ENCODE measurements at regions of chr19 and their contacts with region 1.

Region 1: DNA sequence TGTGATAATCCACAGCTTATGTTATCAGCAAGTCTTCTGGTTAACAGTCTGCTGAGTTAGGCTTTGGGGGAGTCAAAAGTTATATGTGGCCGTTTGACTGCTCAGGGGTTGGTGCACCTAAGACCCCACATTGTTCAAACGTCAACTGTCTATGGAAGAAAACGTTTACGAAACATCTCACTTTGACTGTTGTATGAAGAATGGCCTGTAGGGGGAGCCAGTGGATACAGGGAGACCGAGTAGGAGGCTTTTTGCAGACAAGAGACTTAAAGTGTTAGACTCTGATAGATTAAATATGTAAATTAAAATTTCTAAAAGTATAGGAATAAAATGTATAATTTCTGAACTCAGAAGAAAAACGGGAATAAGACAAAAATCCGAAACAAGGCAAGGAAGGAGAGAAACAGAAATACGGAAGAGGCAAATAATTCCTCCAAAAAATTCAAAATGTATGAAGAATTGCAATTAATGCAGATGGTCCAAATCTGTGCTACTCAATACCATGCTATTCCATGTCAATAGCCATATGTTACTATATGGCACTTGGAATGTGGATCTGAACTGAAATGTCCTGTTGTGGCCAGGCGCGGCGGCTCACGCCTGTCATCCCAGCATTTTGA is 37.8 kb downstream of the TNFSF14 start:
- DNase-seq: peak; percentile 52 to 90 (median 84)
- ATAC-seq: peak; percentile 96
- H3K4me3 ChIP-seq: no peak overlapping the region
- H3K4me3 Mint-ChIP-seq: no peak overlapping the region
- H3K27ac ChIP-seq: no peak overlapping the region
- H3K27ac Mint-ChIP-seq: no peak overlapping the region
- H3K4me1 ChIP-seq: no peaks in the 10 kb centered on the region
- H3K4me1 Mint-ChIP-seq: peaks cover 12% of the 10 kb centered on the region
- H3K27me3 ChIP-seq: no peaks in the 10 kb centered on the region
- H3K27me3 Mint-ChIP-seq: peaks cover 3% of the 10 kb centered on the region
- CTCF ChIP-seq: peak; percentile 85

Region 2: DNA sequence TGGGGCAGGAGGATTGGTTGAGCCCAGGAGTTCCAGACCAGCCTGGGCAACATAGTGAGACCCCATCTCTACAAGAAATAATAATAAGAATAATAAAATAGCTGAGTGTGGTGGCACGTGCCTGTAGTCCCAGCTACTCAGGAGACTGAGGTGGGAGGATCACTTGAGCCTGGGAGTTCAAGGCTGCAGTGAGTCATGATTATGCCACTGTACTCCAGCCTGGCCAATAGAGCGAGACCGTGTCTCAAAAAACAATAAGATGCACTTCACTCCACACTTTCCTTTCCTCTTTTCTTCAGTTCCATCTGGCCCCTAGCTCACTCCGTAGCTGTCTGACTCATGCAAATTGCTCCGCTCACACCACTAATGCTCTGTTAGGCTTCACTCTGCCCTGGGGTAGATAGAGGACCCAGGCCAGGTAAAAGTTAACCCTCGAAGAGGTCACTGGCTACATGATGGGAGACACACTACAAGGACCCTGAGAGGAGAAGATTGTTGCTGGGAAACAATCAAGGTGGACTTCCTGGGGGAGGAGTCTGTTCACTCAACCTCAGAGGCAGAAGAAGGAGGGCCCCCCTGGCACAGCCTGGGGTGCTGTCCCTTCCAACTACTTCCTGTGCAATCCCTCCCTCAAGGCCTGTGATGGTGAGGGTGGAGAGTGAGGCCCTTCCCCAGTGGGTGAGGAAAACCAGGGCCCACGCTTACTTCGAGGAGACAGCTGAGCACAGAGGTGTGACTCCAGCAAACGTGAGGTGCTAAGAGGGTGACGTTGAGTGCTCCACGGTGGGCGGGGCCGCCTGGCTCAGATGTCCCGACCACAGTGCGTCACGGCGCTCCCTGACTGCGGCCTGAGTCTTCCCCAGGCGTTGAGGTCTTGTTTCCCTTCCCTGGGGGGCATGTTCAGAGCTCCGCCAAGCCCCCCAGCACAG is 110.1 kb before region 1 on chr19:
- CTCF ChIA-PET with region 1: interaction called, 23 read pairs
- POLR2A ChIA-PET with region 1: no interaction called
- intact Hi-C with region 1: loop called (anchors 1 to 2 kb)
- DNase-seq: peak; percentile 41 to 96 (median 70)
- ATAC-seq: peak; percentile 91
- H3K4me3 ChIP-seq: no peak overlapping the region
- H3K4me3 Mint-ChIP-seq: no peak overlapping the region
- H3K27ac ChIP-seq: peak overlapping the region; percentile 21 to 89
- H3K27ac Mint-ChIP-seq: peak overlapping the region; percentile 63
- H3K4me1 ChIP-seq: peaks cover 26% of the 10 kb centered on the region
- H3K4me1 Mint-ChIP-seq: peaks cover 32% of the 10 kb centered on the region
- H3K27me3 ChIP-seq: no peaks in the 10 kb centered on the region
- H3K27me3 Mint-ChIP-seq: no peaks in the 10 kb centered on the region
- CTCF ChIP-seq: no peak

Region 3: GRCh38 chr19:6674868-6675305 is 42.8 kb after region 1 on chr19:
- CTCF ChIA-PET with region 1: interaction called, 6 read pairs
- POLR2A ChIA-PET with region 1: no interaction called
- intact Hi-C with region 1: loop called in 1 of 2 experiments (anchors 5 kb)
- DNase-seq: peak; percentile 56 to 93 (median 86)
- ATAC-seq: peak; percentile 67
- H3K4me3 ChIP-seq: peak overlapping the region in 1 of 2 experiments; percentile 31
- H3K4me3 Mint-ChIP-seq: peak overlapping the region; percentile 50
- H3K27ac ChIP-seq: peak overlapping the region in 1 of 2 experiments; percentile 6
- H3K27ac Mint-ChIP-seq: peak overlapping the region; percentile 84
- H3K4me1 ChIP-seq: peaks cover 33% of the 10 kb centered on the region
- H3K4me1 Mint-ChIP-seq: peaks cover 45% of the 10 kb centered on the region
- H3K27me3 ChIP-seq: no peaks in the 10 kb centered on the region
- H3K27me3 Mint-ChIP-seq: no peaks in the 10 kb centered on the region
- CTCF ChIP-seq: no peak

Region 4: DNA sequence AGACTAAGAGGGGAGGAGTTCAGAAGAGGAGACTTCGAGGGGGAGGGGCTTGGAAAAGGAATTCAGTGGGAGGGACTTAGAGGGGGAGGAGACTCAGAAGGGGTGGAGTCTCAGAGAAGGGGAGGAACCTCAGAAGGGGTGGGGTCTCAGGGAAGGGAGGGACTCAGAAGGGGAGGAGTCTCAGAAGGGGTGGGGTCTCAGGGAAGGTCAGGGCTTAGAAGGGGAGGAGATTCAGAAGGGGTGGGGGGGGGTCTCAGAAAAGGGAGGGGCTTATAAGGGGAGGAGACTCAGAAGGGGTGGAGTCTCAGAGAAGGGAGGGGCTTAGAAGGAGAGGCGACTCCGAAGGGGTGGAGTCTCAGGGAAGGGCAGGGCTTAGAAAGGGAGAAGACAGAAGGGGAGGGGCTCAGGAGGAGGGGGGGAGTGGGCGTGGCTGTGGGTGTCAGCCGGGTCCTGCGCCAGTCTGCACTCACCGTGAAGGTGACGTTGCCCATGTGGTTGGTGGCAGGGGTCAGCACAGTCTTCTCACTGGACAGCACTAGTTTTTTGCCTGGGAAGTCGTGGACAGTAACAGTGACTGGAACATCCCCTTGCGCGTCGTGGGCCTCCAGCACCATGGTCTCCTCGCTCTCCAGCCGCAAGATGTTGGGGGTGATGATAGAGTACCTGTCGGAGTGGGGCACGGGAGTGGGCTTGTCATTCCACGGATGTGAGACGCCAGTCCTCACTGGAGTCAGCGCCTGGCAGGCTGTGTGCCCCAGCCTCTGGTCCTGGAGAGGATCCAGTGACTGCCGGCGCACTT is 86.8 kb after region 1 on chr19:
- CTCF ChIA-PET with region 1: no interaction called
- POLR2A ChIA-PET with region 1: no interaction called
- intact Hi-C with region 1: loop called (anchors 5 kb)
- DNase-seq: peak in 3 of 9 experiments; percentile 46 to 62 (median 62)
- ATAC-seq: peak; percentile 83
- H3K4me3 ChIP-seq: no peak overlapping the region
- H3K4me3 Mint-ChIP-seq: no peak overlapping the region
- H3K27ac ChIP-seq: no peak overlapping the region
- H3K27ac Mint-ChIP-seq: no peak overlapping the region
- H3K4me1 ChIP-seq: no peaks in the 10 kb centered on the region
- H3K4me1 Mint-ChIP-seq: peaks cover 12% of the 10 kb centered on the region
- H3K27me3 ChIP-seq: no peaks in the 10 kb centered on the region
- H3K27me3 Mint-ChIP-seq: no peaks in the 10 kb centered on the region
- CTCF ChIP-seq: no peak

Region 5: DNA sequence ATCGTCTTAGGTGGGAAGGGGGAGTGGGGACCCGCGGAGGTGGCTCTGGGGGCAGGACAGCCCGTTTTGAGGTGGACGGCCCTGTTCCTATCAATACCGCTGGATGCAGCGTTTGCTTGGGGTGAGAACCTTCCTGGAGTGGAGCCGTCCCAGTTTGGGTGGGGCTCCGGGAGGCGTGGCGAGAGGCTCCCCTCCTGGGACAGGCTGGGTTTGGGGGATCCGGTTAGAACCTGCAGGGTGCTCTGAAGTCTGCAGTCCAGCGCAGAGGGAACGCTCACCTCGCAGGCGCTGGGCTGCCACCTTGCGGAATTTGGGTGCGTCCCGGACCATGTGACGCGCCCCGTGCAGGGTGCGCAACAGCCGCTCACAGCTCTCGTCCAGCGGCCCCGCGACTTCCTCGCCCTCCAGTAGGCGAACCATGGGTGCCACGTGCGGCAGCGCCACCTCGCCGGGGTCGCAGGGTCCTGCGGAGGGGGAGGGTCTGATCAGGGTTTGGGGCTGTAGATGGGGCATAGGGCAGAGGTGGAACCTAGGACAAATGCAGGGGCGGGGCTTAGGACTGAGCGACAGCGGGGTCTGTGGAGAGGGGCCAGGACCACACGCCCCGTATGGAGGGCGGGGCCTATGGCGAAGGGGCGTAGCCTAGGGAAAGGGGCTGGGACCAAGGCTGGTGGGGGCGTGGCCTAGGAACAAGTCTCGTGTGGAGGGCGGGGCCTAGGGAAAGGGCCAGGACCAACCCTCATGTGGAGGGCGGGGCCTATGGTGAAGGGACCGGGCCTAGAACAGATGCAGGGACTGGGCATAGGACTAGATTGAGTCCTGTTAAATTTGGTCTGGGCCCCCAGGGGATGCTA is 121.3 kb after region 1 on chr19:
- CTCF ChIA-PET with region 1: interaction called, 4 read pairs
- POLR2A ChIA-PET with region 1: no interaction called
- intact Hi-C with region 1: loop called in 1 of 2 experiments (anchors 1 kb)
- DNase-seq: peak; percentile 51 to 89 (median 73)
- ATAC-seq: peak; percentile 90
- H3K4me3 ChIP-seq: peak overlapping the region; percentile 42 to 59
- H3K4me3 Mint-ChIP-seq: peak overlapping the region; percentile 76
- H3K27ac ChIP-seq: peak overlapping the region; percentile 35 to 40
- H3K27ac Mint-ChIP-seq: peak overlapping the region; percentile 81
- H3K4me1 ChIP-seq: peaks cover 4% of the 10 kb centered on the region
- H3K4me1 Mint-ChIP-seq: peaks cover 12% of the 10 kb centered on the region
- H3K27me3 ChIP-seq: no peaks in the 10 kb centered on the region
- H3K27me3 Mint-ChIP-seq: no peaks in the 10 kb centered on the region
- CTCF ChIP-seq: peak; percentile 47

Region 6: DNA sequence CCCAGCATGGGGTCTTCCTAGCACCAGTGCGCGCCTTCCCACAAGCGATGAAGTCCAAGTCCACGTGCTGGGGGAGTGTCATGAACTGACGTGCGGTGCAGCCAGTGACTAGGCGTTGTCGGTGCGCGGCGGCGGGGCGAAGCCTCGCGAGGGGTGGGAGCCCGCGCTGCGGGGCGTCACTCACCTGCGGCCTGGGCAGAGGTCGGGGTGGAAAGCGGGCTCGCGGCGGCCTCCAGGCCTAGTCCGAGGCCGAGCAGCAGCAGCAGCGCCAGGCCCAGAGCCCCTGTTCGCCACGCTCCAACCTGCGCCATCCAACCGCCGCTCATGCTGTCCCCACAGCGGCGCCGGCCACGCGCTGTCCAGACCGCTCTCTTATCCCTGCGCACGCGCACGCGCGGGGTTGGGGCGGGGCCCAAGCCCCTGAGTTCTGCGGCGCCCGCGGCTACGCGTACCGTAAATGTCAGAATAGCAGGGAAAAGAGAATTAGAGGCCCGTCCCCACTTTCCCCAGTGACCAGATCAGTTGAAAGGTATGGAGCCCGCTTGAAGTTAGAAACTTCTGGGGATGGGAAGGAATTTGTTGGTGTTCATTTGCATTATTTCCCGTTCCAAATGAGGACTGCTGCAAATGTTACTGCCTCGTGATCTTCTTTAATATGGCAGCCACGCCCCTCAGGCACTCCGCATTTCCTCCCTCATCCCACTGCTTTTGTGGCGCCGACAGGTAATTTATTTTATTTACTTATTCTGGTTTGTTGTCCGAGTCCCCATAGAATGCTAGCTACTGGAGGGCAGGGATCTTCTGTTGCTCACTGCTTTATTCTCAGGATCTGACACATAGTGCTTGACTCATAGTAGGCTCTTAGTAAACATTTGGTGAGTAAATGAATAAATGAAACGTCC is 1676.1 kb after region 1 on chr19 and contains the start of gene CD320:
- CTCF ChIA-PET with region 1: no interaction called
- POLR2A ChIA-PET with region 1: no interaction called
- intact Hi-C with region 1: loop called in 1 of 2 experiments (anchors 5 kb)
- DNase-seq: peak; percentile 71 to 92 (median 86)
- ATAC-seq: peak; percentile 93
- H3K4me3 ChIP-seq: peak within 1 kb of the TSS; percentile 63 to 64
- H3K4me3 Mint-ChIP-seq: peak within 1 kb of the TSS; percentile 91
- H3K27ac ChIP-seq: peak within 1 kb of the TSS; percentile 64 to 71
- H3K27ac Mint-ChIP-seq: peak within 1 kb of the TSS; percentile 94
- H3K4me1 ChIP-seq: peaks cover 29% of the 10 kb centered on the region
- H3K4me1 Mint-ChIP-seq: peaks cover 31% of the 10 kb centered on the region
- H3K27me3 ChIP-seq: no peaks in the 10 kb centered on the region
- H3K27me3 Mint-ChIP-seq: no peaks in the 10 kb centered on the region
- CTCF ChIP-seq: no peak
- total RNA-seq, gene CD320: 15.7 to 19.1 TPM